ENCODE measurements at regions of chr16 and their contacts with region 1.

Region 1: GRCh38 chr16:56317998-56318826 is 107.1 kb downstream of the AMFR start:
- DNase-seq: peak; percentile 3
- ATAC-seq: peak; percentile 99
- H3K4me3 ChIP-seq: no peak overlapping the region
- H3K27ac ChIP-seq: no peak overlapping the region
- H3K4me1 ChIP-seq: no peaks in the 10 kb centered on the region
- H3K27me3 ChIP-seq: peaks cover 2% of the 10 kb centered on the region in 2 experiments; a peak in 1 of 4 replicates
- CTCF ChIP-seq: peak; percentile 83 to 95 (median 90)
- EP300 ChIP-seq: no peak
- POLR2A ChIP-seq: no peak
- RAD21 ChIP-seq: peak; percentile 91

Region 2: DNA sequence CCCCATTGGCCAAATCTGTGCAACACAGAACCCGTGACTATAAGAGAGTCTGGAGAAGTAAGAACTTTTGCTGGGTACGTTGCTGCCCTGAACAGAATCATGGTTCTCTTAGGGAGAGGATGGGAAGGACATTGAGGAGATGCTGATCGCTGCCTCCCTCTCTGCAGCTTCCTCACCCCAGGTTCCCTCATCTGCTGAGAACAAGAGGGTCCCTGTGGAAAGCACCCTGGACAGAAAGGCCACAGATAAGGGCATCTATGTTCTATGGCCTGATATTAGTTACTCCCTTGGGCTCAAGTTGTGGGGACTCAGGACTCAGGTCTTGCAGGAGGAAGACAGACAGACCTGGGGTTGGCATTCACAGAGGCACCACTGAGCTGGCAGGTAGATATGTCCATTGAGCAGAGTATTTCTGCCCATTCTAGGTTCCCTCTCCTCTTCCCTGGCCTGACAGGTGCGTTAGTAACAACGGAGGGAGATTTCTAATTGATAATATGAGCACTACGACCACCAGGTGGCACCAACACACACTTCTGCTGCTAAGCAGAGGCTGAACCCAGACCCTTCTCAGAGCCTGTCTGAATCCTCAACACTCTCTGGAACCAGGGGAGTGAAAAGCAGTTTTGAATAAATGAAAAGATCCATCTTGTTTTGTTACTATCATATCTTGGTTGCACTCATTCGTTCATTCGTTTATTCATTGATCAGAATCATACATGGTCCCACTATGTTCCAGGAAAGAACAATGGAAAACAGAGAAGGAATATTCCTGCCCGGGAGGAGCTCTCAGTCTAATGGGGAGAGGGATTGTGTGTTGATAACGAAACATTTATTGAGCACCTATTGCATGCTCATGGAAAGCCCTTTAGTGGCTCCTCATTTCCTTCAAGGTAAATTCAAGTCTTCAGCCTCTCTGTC is 606.0 kb before region 1 on chr16:
- CTCF ChIA-PET with region 1: no interaction called
- POLR2A ChIA-PET with region 1: no interaction called
- RAD21 ChIA-PET with region 1: no interaction called
- SMC1A ChIA-PET with region 1: no interaction called
- in situ Hi-C with region 1: no loop called
- intact Hi-C with region 1: loop called (anchors 1 kb)
- DNase-seq: no peak
- ATAC-seq: peak; percentile 94
- H3K4me3 ChIP-seq: no peak overlapping the region
- H3K27ac ChIP-seq: no peak overlapping the region
- H3K4me1 ChIP-seq: no peaks in the 10 kb centered on the region
- H3K27me3 ChIP-seq: no peaks in the 10 kb centered on the region
- CTCF ChIP-seq: peak; percentile 57 to 68 (median 63)
- EP300 ChIP-seq: no peak
- POLR2A ChIP-seq: no peak
- RAD21 ChIP-seq: peak; percentile 63

Region 3: DNA sequence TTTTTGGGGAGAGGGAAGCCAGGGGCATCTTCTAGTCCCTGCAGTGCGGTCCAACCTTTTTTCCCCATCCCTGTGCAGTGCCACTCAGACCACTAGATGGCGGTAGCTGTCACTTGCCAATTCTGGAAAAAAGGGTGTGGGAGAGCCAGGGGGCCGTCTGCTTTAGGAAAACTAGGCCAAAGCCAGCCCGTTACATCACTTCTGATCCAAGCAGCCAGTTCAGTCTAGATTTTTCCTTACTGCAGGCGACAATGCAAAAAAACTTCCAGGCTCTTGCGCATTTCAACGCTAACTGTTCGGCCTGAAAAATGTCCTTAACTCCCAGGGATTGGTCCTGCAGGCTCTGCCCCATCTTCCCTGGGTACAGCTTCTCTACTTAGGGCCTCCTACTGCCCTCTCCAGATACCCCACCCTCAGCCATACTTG is 373.8 kb before region 1 on chr16:
- CTCF ChIA-PET with region 1: interaction called, 66 read pairs
- POLR2A ChIA-PET with region 1: no interaction called
- RAD21 ChIA-PET with region 1: interaction called, 8 read pairs
- SMC1A ChIA-PET with region 1: interaction called, 8 read pairs
- in situ Hi-C with region 1: loop called (anchors 5 kb)
- intact Hi-C with region 1: loop called (anchors 1 kb)
- DNase-seq: no peak
- ATAC-seq: peak; percentile 84
- H3K4me3 ChIP-seq: no peak overlapping the region
- H3K27ac ChIP-seq: no peak overlapping the region
- H3K4me1 ChIP-seq: no peaks in the 10 kb centered on the region
- H3K27me3 ChIP-seq: peaks cover 0 to 2% of the 10 kb centered on the region in 2 experiments; a peak in 2 of 4 replicates
- CTCF ChIP-seq: peak; percentile 72 to 94 (median 93)
- EP300 ChIP-seq: no peak
- POLR2A ChIP-seq: no peak
- RAD21 ChIP-seq: peak; percentile 79

Region 4: GRCh38 chr16:55949518-55949917 is 368.7 kb before region 1 on chr16:
- CTCF ChIA-PET with region 1: interaction called, 66 read pairs
- POLR2A ChIA-PET with region 1: no interaction called
- RAD21 ChIA-PET with region 1: interaction called, 8 read pairs
- SMC1A ChIA-PET with region 1: interaction called, 8 read pairs
- in situ Hi-C with region 1: loop called (anchors 5 kb)
- intact Hi-C with region 1: loop called (anchors 1 kb)
- DNase-seq: no peak
- ATAC-seq: no peak
- H3K4me3 ChIP-seq: no peak overlapping the region
- H3K27ac ChIP-seq: no peak overlapping the region
- H3K4me1 ChIP-seq: no peaks in the 10 kb centered on the region
- H3K27me3 ChIP-seq: peaks cover 0 to 2% of the 10 kb centered on the region in 2 experiments; a peak in 2 of 4 replicates
- CTCF ChIP-seq: no peak
- EP300 ChIP-seq: no peak
- POLR2A ChIP-seq: no peak
- RAD21 ChIP-seq: no peak

Region 5: GRCh38 chr16:55968221-55968620 is 350.0 kb before region 1 on chr16:
- CTCF ChIA-PET with region 1: no interaction called
- POLR2A ChIA-PET with region 1: no interaction called
- RAD21 ChIA-PET with region 1: no interaction called
- SMC1A ChIA-PET with region 1: no interaction called
- in situ Hi-C with region 1: no loop called
- intact Hi-C with region 1: no loop called
- DNase-seq: no peak
- ATAC-seq: no peak
- H3K4me3 ChIP-seq: no peak overlapping the region
- H3K27ac ChIP-seq: no peak overlapping the region
- H3K4me1 ChIP-seq: no peaks in the 10 kb centered on the region
- H3K27me3 ChIP-seq: peaks cover 0 to 2% of the 10 kb centered on the region in 2 experiments; a peak in 1 of 4 replicates
- CTCF ChIP-seq: no peak
- EP300 ChIP-seq: no peak
- POLR2A ChIP-seq: no peak
- RAD21 ChIP-seq: no peak

Region 6: GRCh38 chr16:56041686-56042085 is 276.5 kb before region 1 on chr16:
- CTCF ChIA-PET with region 1: interaction called, 5 read pairs
- POLR2A ChIA-PET with region 1: no interaction called
- RAD21 ChIA-PET with region 1: no interaction called
- SMC1A ChIA-PET with region 1: no interaction called
- in situ Hi-C with region 1: no loop called
- intact Hi-C with region 1: loop called (anchors 1 kb)
- DNase-seq: no peak
- ATAC-seq: peak; percentile 90
- H3K4me3 ChIP-seq: no peak overlapping the region
- H3K27ac ChIP-seq: no peak overlapping the region
- H3K4me1 ChIP-seq: no peaks in the 10 kb centered on the region
- H3K27me3 ChIP-seq: no peaks in the 10 kb centered on the region
- CTCF ChIP-seq: peak; percentile 38 to 49 (median 44); a peak in 5 of 6 replicates
- EP300 ChIP-seq: no peak
- POLR2A ChIP-seq: no peak
- RAD21 ChIP-seq: peak; percentile 40

Region 7: DNA sequence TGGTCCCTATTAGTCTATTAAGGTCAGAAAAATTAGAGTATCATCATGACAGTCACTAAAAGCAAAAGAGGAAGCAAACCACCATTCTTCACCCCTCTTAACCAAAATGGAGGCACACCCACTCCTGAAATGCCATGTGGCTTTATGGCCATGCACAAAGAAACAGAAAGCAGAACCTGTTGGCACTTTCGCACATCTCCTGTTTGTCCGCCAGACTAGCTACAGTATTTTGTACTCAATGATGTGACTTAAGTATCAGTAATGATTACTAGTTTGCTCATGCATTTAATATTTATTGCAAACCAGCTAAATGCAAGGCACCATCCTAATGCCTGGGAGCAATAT is 197.1 kb before region 1 on chr16:
- CTCF ChIA-PET with region 1: no interaction called
- POLR2A ChIA-PET with region 1: no interaction called
- RAD21 ChIA-PET with region 1: no interaction called
- SMC1A ChIA-PET with region 1: no interaction called
- in situ Hi-C with region 1: no loop called
- intact Hi-C with region 1: no loop called
- DNase-seq: peak; percentile 2
- ATAC-seq: peak; percentile 73
- H3K4me3 ChIP-seq: no peak overlapping the region
- H3K27ac ChIP-seq: no peak overlapping the region
- H3K4me1 ChIP-seq: no peaks in the 10 kb centered on the region
- H3K27me3 ChIP-seq: peaks cover 0 to 2% of the 10 kb centered on the region in 2 experiments; a peak in 1 of 4 replicates
- CTCF ChIP-seq: no peak
- EP300 ChIP-seq: no peak
- POLR2A ChIP-seq: no peak
- RAD21 ChIP-seq: no peak

Region 8: GRCh38 chr16:56300891-56301850 is 17.0 kb before region 1 on chr16:
- CTCF ChIA-PET with region 1: interaction called, 11 read pairs
- POLR2A ChIA-PET with region 1: no interaction called
- RAD21 ChIA-PET with region 1: no interaction called
- SMC1A ChIA-PET with region 1: no interaction called
- in situ Hi-C with region 1: no loop called
- intact Hi-C with region 1: no loop called
- DNase-seq: no peak
- ATAC-seq: no peak
- H3K4me3 ChIP-seq: no peak overlapping the region
- H3K27ac ChIP-seq: no peak overlapping the region
- H3K4me1 ChIP-seq: no peaks in the 10 kb centered on the region
- H3K27me3 ChIP-seq: peaks cover 0 to 3% of the 10 kb centered on the region in 2 experiments; a peak in 2 of 4 replicates
- CTCF ChIP-seq: no peak
- EP300 ChIP-seq: no peak
- POLR2A ChIP-seq: no peak
- RAD21 ChIP-seq: no peak

Region 9: GRCh38 chr16:56708525-56709442 is 390.6 kb after region 1 on chr16:
- CTCF ChIA-PET with region 1: no interaction called
- POLR2A ChIA-PET with region 1: no interaction called
- RAD21 ChIA-PET with region 1: no interaction called
- SMC1A ChIA-PET with region 1: no interaction called
- in situ Hi-C with region 1: no loop called
- intact Hi-C with region 1: loop called (anchors 10 kb)
- DNase-seq: no peak
- ATAC-seq: peak; percentile 35; the same call in 1 of the 3 replicates
- H3K4me3 ChIP-seq: no peak overlapping the region
- H3K27ac ChIP-seq: no peak overlapping the region
- H3K4me1 ChIP-seq: no peaks in the 10 kb centered on the region
- H3K27me3 ChIP-seq: no peaks in the 10 kb centered on the region
- CTCF ChIP-seq: no peak
- EP300 ChIP-seq: no peak
- POLR2A ChIP-seq: no peak
- RAD21 ChIP-seq: no peak